ENCODE measurements at regions of chr12 and their contacts with region 1.

Region 1: DNA sequence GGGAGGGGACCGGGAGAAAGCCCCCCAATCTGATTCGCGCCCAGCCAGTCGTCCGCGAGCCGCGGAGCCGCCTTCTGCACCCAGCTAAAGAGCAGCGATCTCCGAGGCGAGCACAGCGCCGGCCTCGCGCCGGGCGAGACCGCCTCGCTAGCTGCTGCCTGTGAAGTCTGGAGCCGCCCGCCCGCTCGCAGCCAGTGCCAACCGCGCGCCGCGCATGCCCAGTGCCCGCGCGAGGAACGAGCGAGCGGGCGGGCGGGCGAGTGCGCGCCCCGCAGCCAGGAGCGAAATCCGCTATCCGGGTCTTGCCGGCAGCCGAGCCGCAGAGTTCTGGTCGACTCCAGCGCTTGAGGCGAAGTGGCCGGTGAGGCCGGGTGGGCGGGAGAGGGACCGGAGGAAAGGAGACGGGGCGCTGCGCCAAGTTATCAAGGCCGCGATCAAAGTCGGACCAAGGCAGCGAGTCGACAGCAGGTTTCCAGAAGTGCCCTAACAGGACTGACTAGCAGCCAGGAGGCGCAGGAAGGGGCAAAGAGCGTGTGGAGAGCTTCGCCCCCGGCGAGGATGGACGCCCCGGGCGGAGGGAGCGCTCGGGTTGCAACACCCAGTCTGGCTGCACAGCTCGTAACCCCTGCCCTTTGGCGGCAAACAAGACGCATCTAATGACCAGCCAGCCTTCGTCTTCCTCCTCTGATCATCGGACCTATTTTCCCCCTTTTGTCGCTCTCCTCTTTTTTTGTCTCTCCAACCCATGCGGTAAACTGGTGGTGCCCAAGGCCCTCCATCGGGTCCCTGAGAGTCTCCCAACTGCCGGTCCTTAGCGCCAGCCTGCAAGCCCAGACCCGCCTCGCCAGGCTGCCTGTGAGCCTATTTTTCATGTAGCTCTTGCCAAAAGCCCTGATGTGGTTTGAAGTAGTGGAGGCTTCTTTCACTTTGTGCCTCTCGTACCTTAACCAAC is at the start of gene EPS8:
- DNase-seq: peak; percentile 96
- H3K4me3 ChIP-seq: peak within 1 kb of the TSS; percentile 67
- H3K27ac ChIP-seq: peak within 1 kb of the TSS; percentile 61
- H3K4me1 ChIP-seq: peaks cover 19% of the 10 kb centered on the region
- H3K27me3 ChIP-seq: no peaks in the 10 kb centered on the region
- CTCF ChIP-seq: 0 out of 2 replicates have a peak, but pooled peaks have one; percentile 13
- total RNA-seq, gene EPS8: 14.0 and 16.3 TPM in 2 replicates

Region 2: DNA sequence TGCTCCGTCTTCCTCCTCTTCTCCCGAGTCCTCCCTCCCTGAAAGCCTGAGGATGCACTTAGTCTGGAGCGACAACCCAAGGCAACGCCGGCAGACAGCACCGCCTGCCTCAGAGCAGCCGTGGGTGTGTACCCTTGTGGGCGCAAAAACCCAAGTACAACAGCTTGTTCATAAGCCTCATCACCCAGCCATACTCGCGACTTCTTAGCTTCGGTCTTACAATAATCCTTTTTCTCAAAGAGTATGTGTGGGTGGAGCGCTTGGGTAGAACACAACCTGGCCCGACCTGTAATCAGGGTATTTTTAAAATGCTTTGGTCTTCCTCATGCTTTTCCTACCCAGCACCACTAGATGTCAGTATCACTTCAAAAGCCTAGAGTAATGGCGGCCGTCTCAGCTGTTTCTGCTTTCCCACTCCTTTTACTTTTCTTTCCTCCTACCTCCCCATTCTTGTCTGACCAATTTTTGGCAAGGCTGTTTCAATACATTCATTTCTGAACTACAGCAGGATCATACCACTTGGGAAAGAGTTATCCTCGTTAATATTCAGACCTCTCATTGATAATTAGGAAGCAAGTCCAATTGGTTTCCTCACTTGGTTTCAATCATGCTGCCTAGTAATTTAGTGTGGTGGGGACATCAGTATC is 199.2 kb before region 1 on chr12:
- CTCF ChIA-PET with region 1: interaction called, 4 read pairs
- POLR2A ChIA-PET with region 1: no interaction called
- intact Hi-C with region 1: loop called (anchors 5 kb)
- DNase-seq: peak; percentile 80
- H3K4me3 ChIP-seq: peak overlapping the region; percentile 30
- H3K27ac ChIP-seq: no peak overlapping the region
- H3K4me1 ChIP-seq: no peaks in the 10 kb centered on the region
- H3K27me3 ChIP-seq: no peaks in the 10 kb centered on the region
- CTCF ChIP-seq: peak; percentile 94

Region 3: GRCh38 chr12:15728118-15728598 is 61.3 kb before region 1 on chr12:
- CTCF ChIA-PET with region 1: no interaction called
- POLR2A ChIA-PET with region 1: no interaction called
- intact Hi-C with region 1: no loop called
- DNase-seq: peak; percentile 74
- H3K4me3 ChIP-seq: no peak overlapping the region
- H3K27ac ChIP-seq: no peak overlapping the region
- H3K4me1 ChIP-seq: peaks cover 27% of the 10 kb centered on the region
- H3K27me3 ChIP-seq: no peaks in the 10 kb centered on the region
- CTCF ChIP-seq: no peak

Region 4: GRCh38 chr12:15919418-15919817 is 129.9 kb after region 1 on chr12:
- CTCF ChIA-PET with region 1: no interaction called
- POLR2A ChIA-PET with region 1: no interaction called
- intact Hi-C with region 1: no loop called
- DNase-seq: no peak
- H3K4me3 ChIP-seq: no peak overlapping the region
- H3K27ac ChIP-seq: no peak overlapping the region
- H3K4me1 ChIP-seq: peaks cover 4% of the 10 kb centered on the region
- H3K27me3 ChIP-seq: no peaks in the 10 kb centered on the region
- CTCF ChIP-seq: no peak